A549 (cell line): ENCODE measurements at regions of chr15 and their contacts with region 1.

Region 1: GRCh38 chr15:71752604-71753289 is 57.6 kb upstream of the NR2E3 start:
- DNase-seq: peak; percentile 93 to 97
- ATAC-seq: peak; percentile 82 to 84
- H3K4me3 ChIP-seq: no peak overlapping the region
- H3K27ac ChIP-seq: peak overlapping the region; percentile 84 to 99
- H3K4me1 ChIP-seq: peaks cover 55% of the 10 kb centered on the region
- CTCF ChIP-seq: peak; percentile 91
- EP300 ChIP-seq: peak; percentile 70 to 73; a peak in 2 of 5 replicates
- POLR2A ChIP-seq: no peak
- RAD21 ChIP-seq: peak; percentile 94

Region 2: GRCh38 chr15:71730277-71731144 is 22.2 kb before region 1 on chr15:
- CTCF ChIA-PET with region 1: interaction called, 17 read pairs
- POLR2A ChIA-PET with region 1: no interaction called
- DNase-seq: peak; percentile 85 to 88
- ATAC-seq: peak; percentile 88 to 98
- H3K4me3 ChIP-seq: no peak overlapping the region
- H3K27ac ChIP-seq: no peak overlapping the region
- H3K4me1 ChIP-seq: peaks cover 4% of the 10 kb centered on the region; the same call in 2 of the 3 replicates
- CTCF ChIP-seq: peak; percentile 91
- EP300 ChIP-seq: no peak
- POLR2A ChIP-seq: no peak
- RAD21 ChIP-seq: peak; percentile 80 to 81

Region 3: GRCh38 chr15:71737761-71738160 is 15.0 kb before region 1 on chr15:
- CTCF ChIA-PET with region 1: interaction called, 49 read pairs
- POLR2A ChIA-PET with region 1: no interaction called
- DNase-seq: no peak
- ATAC-seq: no peak
- H3K4me3 ChIP-seq: no peak overlapping the region
- H3K27ac ChIP-seq: no peak overlapping the region
- H3K4me1 ChIP-seq: no peaks in the 10 kb centered on the region; the same call in 2 of the 3 replicates
- CTCF ChIP-seq: no peak
- EP300 ChIP-seq: no peak
- POLR2A ChIP-seq: no peak
- RAD21 ChIP-seq: no peak

Region 4: GRCh38 chr15:71780115-71780976 is 27.6 kb after region 1 on chr15:
- CTCF ChIA-PET with region 1: interaction called, 175 read pairs
- POLR2A ChIA-PET with region 1: interaction called, 3 read pairs
- DNase-seq: peak; percentile 84 to 90
- ATAC-seq: peak; percentile 59 to 80
- H3K4me3 ChIP-seq: no peak overlapping the region
- H3K27ac ChIP-seq: peak overlapping the region; percentile 72 to 75
- H3K4me1 ChIP-seq: peaks cover 26% of the 10 kb centered on the region
- CTCF ChIP-seq: peak; percentile 93
- EP300 ChIP-seq: no peak
- POLR2A ChIP-seq: no peak
- RAD21 ChIP-seq: peak; percentile 67 to 77

Region 5: GRCh38 chr15:71792521-71792920 is 39.8 kb after region 1 on chr15:
- CTCF ChIA-PET with region 1: interaction called, 522 read pairs
- POLR2A ChIA-PET with region 1: no interaction called
- DNase-seq: peak in 1 of 2 experiments; percentile 46
- ATAC-seq: no peak
- H3K4me3 ChIP-seq: no peak overlapping the region
- H3K27ac ChIP-seq: peak overlapping the region; percentile 64 to 83; a peak in 4 of 6 replicates
- H3K4me1 ChIP-seq: peaks cover 32% of the 10 kb centered on the region
- CTCF ChIP-seq: no peak
- EP300 ChIP-seq: no peak
- POLR2A ChIP-seq: no peak
- RAD21 ChIP-seq: no peak